A673 (cell line): ENCODE measurements at regions of chr1 and their contacts with region 1.

Region 1: DNA sequence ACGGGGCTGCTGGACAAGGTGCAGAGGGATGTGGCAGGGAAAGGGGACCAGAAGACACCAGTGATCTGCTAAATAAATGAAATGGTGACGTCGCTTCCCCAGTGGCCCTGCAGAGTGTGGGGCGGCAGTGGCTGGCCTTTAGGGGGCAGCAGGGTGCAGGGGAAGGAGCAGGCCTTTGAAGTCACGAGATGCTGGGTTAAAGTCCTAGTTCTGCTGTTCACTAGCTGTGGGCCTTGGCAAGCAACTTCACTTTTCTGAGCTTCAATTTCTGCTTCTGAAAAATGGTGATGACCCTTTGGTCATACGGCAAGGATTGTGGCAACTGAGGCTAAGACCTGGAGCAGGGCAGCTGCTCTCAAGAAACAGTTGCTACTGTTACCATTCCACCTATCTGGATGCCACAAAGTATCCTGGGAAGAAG is 9.2 kb upstream of the GALE start:
- DNase-seq: peak; percentile 89
- H3K4me3 ChIP-seq: no peak overlapping the region
- H3K27ac ChIP-seq: no peak overlapping the region
- H3K4me1 ChIP-seq: no peaks in the 10 kb centered on the region
- H3K27me3 ChIP-seq: no peaks in the 10 kb centered on the region
- CTCF ChIP-seq: peak; percentile 87

Region 2: DNA sequence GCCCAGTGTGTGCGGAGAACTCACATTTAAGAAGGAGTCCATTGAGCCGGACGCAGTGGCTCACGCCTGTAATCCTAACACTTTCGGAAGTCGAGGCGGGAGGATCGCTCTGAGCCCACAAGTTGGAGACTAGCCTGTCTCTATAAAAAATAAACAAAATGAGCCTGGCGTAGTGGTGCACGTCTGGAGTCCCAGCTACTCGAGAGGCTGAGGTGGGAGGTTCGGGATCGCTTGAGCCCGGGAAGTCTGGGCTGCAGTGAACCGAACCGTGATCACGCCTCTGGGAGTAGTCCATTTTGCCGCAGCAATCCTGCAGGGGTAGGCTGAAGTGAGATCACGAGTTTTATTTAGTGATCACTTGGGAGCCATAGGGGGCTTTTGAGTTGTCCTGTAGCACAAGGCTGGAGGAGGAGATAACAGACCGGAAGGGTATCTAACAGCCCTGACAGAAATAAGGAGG is 58.8 kb after region 1 on chr1:
- CTCF ChIA-PET with region 1: interaction called, 20 read pairs
- POLR2A ChIA-PET with region 1: no interaction called
- intact Hi-C with region 1: no loop called
- DNase-seq: no peak
- H3K4me3 ChIP-seq: peak overlapping the region; percentile 77
- H3K27ac ChIP-seq: peak overlapping the region; percentile 21
- H3K4me1 ChIP-seq: no peaks in the 10 kb centered on the region
- H3K27me3 ChIP-seq: no peaks in the 10 kb centered on the region
- CTCF ChIP-seq: peak; percentile 27; the same call in 1 of the 2 replicates

Region 3: DNA sequence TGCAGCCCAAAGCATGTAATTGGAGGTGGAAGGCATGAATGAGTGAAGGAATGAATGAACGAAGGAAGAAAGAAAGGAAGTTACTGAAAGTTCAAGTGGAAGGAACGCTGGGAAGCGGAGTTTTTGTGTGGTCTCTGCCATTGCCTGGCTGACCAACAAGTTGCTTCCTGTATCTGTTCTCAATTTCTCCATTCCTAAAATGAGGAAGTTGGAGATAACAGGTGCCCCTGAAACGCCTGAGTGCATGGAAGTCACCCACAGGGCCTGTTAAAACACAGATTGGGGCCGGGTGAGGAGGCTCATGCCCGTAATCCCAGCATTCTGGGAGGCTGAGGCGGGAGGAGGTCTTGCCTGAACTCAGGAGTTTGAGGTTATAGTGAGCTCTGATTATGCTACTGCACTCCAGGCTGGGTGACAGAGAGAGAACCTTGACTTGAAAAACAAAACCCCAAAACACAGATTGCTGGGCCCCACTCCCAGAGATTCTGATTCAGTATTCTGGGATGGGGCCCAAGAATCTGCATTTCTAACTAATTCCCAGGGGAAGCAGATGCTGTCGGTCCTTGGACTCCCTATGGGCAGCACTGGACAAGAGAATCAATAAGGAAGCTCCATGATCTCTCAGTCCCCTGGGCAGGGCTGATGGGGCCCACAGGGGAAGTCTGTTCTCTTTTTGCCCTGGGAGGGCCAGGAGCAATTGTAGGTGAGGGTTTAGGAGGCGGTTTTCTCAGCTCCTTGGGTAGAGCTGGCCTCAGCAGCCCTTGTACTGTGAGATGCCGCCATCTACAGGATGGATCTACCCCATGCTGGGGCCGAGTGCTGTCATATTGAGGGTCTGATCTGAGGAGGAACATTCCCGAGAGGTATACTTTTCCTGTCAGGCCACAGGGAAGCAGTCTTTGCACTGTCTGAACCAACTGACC is 106.7 kb after region 1 on chr1:
- CTCF ChIA-PET with region 1: interaction called, 20 read pairs
- POLR2A ChIA-PET with region 1: interaction called, 3 read pairs
- intact Hi-C with region 1: loop called (anchors 5 kb)
- DNase-seq: peak; percentile 86
- H3K4me3 ChIP-seq: no peak overlapping the region
- H3K27ac ChIP-seq: no peak overlapping the region
- H3K4me1 ChIP-seq: no peaks in the 10 kb centered on the region
- H3K27me3 ChIP-seq: no peaks in the 10 kb centered on the region
- CTCF ChIP-seq: peak; percentile 75

Region 4: GRCh38 chr1:24578846-24579245 is 769.1 kb after region 1 on chr1:
- CTCF ChIA-PET with region 1: no interaction called
- POLR2A ChIA-PET with region 1: interaction called, 12 read pairs
- intact Hi-C with region 1: no loop called
- DNase-seq: no peak
- H3K4me3 ChIP-seq: no peak overlapping the region
- H3K27ac ChIP-seq: no peak overlapping the region
- H3K4me1 ChIP-seq: no peaks in the 10 kb centered on the region
- H3K27me3 ChIP-seq: no peaks in the 10 kb centered on the region
- CTCF ChIP-seq: no peak